CD4-positive, alpha-beta T cell (primary cell): ENCODE measurements at regions of chr19 and their contacts with region 1.

Region 1: DNA sequence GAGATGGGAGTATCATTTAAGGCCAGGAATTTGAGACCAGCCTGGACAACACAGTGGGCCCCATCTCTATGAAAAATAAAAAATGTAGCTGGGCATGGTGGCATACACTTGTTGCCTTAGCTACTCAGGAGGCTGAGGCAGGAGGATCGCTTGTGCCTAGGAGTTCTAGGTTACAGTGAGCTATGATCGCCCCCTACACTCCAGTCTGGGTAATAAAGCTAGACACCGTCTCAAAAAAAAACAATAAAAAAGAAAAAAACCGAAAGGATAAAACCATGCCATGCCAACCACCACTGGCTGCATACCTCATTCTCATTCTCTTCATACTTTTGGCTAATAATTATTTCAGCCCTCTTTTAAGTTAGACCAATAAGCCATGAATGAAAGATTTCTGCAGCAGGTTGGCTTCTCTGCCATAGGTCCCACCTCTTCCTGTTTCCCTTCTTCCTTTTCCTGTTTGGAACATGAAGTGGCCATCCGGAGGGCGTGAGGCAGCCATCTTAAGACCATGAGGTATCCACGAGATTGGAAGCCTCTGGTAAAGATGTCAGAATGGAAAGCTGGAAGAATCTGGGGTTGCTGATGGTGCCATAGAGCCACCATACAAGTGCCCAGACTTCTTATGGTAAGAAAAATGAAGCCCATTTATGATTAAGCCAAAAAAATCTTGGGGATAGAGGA is 171.3 kb downstream of the CACNA1A start:
- DNase-seq: no peak
- ATAC-seq: no peak
- H3K4me3 ChIP-seq: no peak overlapping the region
- H3K4me3 Mint-ChIP-seq: no peak overlapping the region
- H3K27ac ChIP-seq: no peak overlapping the region
- H3K27ac Mint-ChIP-seq: no peak overlapping the region
- H3K4me1 ChIP-seq: no peaks in the 10 kb centered on the region
- H3K4me1 Mint-ChIP-seq: no peaks in the 10 kb centered on the region
- H3K27me3 ChIP-seq: peaks cover 0 to 5% of the 10 kb centered on the region in 2 experiments
- H3K27me3 Mint-ChIP-seq: peaks cover 62% of the 10 kb centered on the region
- CTCF ChIP-seq: no peak

Region 2: DNA sequence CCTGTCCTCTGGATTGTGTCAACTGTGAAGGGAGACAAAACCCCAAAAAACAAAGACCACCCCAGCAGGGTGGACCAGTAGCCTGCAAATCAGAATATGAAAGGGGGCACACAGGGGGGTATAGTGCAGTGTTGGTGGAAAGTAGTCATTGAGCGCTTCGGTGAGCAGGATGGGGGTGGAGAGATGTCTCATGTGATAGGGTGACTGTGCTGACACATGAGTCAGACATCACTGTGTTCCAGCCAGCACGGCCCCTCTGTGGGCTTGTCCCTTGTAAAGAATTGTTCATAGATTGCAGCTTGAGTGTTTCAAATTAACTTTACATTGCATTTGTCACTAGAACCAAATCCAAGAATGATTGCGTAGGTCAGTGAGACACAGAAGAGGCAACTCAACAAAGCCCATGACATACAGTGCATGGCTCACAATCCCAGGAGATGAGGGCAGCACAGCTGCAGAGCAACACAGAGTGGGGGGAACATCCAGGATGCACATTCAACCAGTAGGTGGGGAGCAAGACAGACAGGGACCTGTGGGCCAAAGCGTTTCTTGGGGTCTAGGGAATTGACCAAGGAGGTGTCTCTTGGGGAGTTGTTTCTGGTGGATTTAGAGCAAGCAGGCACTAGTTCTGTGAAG is 1513.3 kb before region 1 on chr19:
- CTCF ChIA-PET with region 1: no interaction called
- POLR2A ChIA-PET with region 1: no interaction called
- intact Hi-C with region 1: loop called in 1 of 2 experiments (anchors 10 kb)
- DNase-seq: no peak
- ATAC-seq: no peak
- H3K4me3 ChIP-seq: no peak overlapping the region
- H3K4me3 Mint-ChIP-seq: no peak overlapping the region
- H3K27ac ChIP-seq: no peak overlapping the region
- H3K27ac Mint-ChIP-seq: no peak overlapping the region
- H3K4me1 ChIP-seq: no peaks in the 10 kb centered on the region
- H3K4me1 Mint-ChIP-seq: peaks cover 8% of the 10 kb centered on the region
- H3K27me3 ChIP-seq: no peaks in the 10 kb centered on the region
- H3K27me3 Mint-ChIP-seq: no peaks in the 10 kb centered on the region
- CTCF ChIP-seq: no peak

Region 3: GRCh38 chr19:12478234-12478941 is 856.6 kb before region 1 on chr19:
- CTCF ChIA-PET with region 1: no interaction called
- POLR2A ChIA-PET with region 1: no interaction called
- intact Hi-C with region 1: no loop called
- DNase-seq: peak in 3 of 14 experiments; percentile 14 to 30 (median 23)
- ATAC-seq: peak; percentile 76
- H3K4me3 ChIP-seq: no peak overlapping the region
- H3K4me3 Mint-ChIP-seq: peak overlapping the region; percentile 42
- H3K27ac ChIP-seq: peak overlapping the region; percentile 20 to 51
- H3K27ac Mint-ChIP-seq: peak overlapping the region; percentile 72
- H3K4me1 ChIP-seq: peaks cover 28% of the 10 kb centered on the region
- H3K4me1 Mint-ChIP-seq: peaks cover 50% of the 10 kb centered on the region
- H3K27me3 ChIP-seq: no peaks in the 10 kb centered on the region
- H3K27me3 Mint-ChIP-seq: no peaks in the 10 kb centered on the region
- CTCF ChIP-seq: no peak